WTC11 (cell line): ENCODE measurements at regions of chrX and their contacts with region 1.

Region 1: DNA sequence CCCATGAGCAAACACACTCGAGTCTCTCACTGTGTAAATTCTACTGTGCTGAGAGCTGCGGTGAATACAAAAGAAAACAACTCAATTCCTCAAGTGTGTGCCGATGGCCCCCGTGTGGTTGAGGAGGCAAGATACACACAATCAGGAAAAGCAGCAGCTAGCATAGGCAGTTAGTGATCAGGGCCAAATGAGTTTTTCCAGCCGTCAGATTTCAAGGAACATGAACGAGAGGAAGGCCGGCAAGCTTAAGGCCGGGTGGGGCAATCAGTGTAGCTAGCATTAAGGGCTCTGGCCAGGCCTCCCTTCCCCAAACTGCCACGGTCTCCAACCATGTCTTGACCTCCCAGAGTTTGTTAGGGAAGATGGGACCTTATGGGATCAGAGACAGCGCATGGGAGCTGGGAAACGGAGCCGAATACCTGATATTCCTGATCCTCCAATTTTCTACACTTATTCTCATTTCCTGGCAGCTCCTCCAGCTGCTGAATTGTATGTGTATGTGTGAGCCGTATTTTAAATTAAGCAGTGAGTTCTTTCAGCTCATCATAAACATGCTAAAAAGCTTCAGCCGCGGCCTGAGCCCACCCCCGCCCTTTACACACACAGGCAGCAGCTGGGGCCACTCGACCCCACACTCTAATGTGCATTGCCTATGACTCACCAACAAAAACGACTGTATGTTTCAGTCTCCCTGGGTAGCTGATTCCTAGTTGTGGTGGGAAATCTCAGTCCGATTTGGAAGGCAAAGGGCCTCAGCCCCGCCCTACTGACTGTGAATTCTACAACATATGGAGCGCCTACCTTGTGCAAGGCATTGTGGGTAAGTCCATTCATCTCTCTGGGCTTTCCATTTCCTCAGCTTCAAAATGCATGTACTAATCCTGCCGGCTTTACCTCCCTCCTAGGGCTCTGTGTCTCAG is 59.9 kb downstream of the RTL9 start:
- DNase-seq: peak; percentile 14
- ATAC-seq: peak; percentile 90
- H3K4me3 Mint-ChIP-seq: no peak overlapping the region
- H3K27ac Mint-ChIP-seq: no peak overlapping the region
- H3K4me1 Mint-ChIP-seq: peaks cover 18% of the 10 kb centered on the region
- H3K27me3 Mint-ChIP-seq: peaks cover 12% of the 10 kb centered on the region
- CTCF ChIP-seq: no peak

Region 2: DNA sequence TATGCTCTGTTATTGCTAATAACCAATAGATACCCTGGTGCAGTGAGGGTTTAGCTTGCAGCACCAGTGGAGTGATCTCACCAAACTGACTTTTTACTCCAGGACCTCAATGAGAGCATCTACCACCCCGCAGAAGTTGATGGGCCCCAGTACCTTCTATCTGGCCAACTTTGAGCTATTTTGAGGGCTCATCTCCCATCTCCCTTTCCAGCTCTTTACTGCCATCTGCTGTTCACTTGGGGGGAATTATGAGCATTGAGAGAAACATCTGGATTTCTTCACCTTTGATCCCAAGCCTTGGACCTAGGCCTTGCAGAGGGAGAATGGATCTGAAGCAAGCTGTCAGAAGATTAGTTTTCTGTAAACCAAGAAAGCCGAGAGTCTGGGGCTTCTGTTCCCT is 272.1 kb before region 1 on chrX:
- CTCF ChIA-PET with region 1: interaction called, 32 read pairs
- POLR2A ChIA-PET with region 1: no interaction called
- DNase-seq: peak; percentile 12
- ATAC-seq: peak; percentile 63
- H3K4me3 Mint-ChIP-seq: no peak overlapping the region
- H3K27ac Mint-ChIP-seq: no peak overlapping the region
- H3K4me1 Mint-ChIP-seq: peaks cover 13% of the 10 kb centered on the region
- H3K27me3 Mint-ChIP-seq: no peaks in the 10 kb centered on the region
- CTCF ChIP-seq: no peak

Region 3: DNA sequence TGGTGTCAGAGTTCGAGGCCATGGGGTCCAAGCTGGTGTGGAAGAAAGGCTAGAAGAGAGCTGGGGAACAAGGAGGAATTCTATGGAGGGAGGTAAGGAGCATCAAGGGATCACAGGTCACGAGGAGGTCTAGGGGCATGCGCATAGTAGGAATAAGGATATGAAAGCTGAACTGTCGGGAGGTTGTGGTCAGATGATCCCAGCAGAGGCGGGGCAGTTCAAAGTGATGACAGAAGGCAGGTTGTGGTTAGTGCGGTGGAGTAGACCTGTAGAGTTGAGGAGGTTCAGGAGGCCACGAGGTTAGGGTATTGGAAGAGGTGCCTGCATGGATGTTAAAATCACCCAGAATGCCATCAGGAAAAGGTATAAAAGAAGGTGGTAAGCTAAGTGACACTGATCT is 259.3 kb before region 1 on chrX:
- CTCF ChIA-PET with region 1: interaction called, 59 read pairs
- POLR2A ChIA-PET with region 1: no interaction called
- DNase-seq: no peak
- ATAC-seq: no peak
- H3K4me3 Mint-ChIP-seq: no peak overlapping the region
- H3K27ac Mint-ChIP-seq: no peak overlapping the region
- H3K4me1 Mint-ChIP-seq: 0 out of 2 replicates have a peak, but pooled peaks cover 6% of the 10 kb centered on the region
- H3K27me3 Mint-ChIP-seq: no peaks in the 10 kb centered on the region
- CTCF ChIP-seq: no peak

Region 4: DNA sequence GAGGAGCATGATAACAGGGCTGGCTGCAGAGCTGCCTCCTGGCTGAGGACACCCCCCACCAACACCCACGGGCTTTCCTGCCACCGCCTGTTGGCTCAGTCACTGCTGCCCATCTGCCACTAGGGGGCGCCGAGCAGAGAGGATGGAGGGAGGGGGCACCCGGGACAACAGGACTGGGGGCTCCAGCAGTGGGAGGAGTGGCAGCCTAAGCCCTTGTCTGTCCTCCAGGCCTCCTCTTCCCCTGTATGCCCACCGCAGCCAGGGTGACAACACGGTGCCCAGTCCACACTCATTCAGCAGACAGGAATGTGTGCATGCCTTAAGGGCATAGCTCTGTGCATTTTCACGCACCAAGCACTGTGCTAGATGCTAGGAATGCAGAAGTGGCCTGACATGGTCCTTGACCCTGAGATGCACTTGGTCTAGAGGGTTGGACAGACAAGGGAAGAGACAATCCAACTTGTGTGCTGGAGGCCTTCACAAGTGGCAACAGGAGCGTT is 250.6 kb before region 1 on chrX:
- CTCF ChIA-PET with region 1: interaction called, 24 read pairs
- POLR2A ChIA-PET with region 1: no interaction called
- DNase-seq: peak; percentile 66
- ATAC-seq: peak; percentile 91
- H3K4me3 Mint-ChIP-seq: no peak overlapping the region
- H3K27ac Mint-ChIP-seq: no peak overlapping the region
- H3K4me1 Mint-ChIP-seq: no peaks in the 10 kb centered on the region
- H3K27me3 Mint-ChIP-seq: no peaks in the 10 kb centered on the region
- CTCF ChIP-seq: peak; percentile 63

Region 5: GRCh38 chrX:110407910-110408545 is 10.5 kb before region 1 on chrX:
- CTCF ChIA-PET with region 1: interaction called, 13 read pairs
- POLR2A ChIA-PET with region 1: no interaction called
- DNase-seq: peak; percentile 41
- ATAC-seq: peak; percentile 70
- H3K4me3 Mint-ChIP-seq: no peak overlapping the region
- H3K27ac Mint-ChIP-seq: no peak overlapping the region
- H3K4me1 Mint-ChIP-seq: peaks cover 11% of the 10 kb centered on the region
- H3K27me3 Mint-ChIP-seq: no peaks in the 10 kb centered on the region
- CTCF ChIP-seq: peak; percentile 64

Region 6: DNA sequence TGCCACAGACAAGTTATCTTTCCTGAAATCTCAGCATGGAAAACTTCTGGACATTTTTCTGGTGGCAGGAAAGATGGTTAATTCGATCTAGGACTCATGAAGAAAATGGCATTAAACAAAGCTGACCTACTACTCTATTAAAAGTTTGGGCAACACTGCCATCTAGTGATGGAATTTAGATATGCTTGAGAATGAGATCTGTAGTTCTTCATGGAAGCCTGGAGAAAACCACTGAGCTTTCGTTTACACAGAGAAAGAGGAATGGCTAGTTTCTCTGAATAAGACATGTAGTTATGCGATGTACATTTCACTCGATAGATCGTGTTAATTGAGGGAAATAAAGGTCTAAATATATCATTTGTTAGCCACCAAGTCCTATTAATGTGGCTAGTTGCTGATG is 428.8 kb after region 1 on chrX:
- CTCF ChIA-PET with region 1: interaction called, 16 read pairs
- POLR2A ChIA-PET with region 1: no interaction called
- DNase-seq: no peak
- ATAC-seq: peak; percentile 77
- H3K4me3 Mint-ChIP-seq: no peak overlapping the region
- H3K27ac Mint-ChIP-seq: no peak overlapping the region
- H3K4me1 Mint-ChIP-seq: no peaks in the 10 kb centered on the region
- H3K27me3 Mint-ChIP-seq: no peaks in the 10 kb centered on the region
- CTCF ChIP-seq: 0 out of 2 replicates have a peak, but pooled peaks have one; percentile 28